Colonic mucosa (tissue), 4 donors: ENCODE measurements at regions of chr6 and their contacts with region 1.

Region 1: DNA sequence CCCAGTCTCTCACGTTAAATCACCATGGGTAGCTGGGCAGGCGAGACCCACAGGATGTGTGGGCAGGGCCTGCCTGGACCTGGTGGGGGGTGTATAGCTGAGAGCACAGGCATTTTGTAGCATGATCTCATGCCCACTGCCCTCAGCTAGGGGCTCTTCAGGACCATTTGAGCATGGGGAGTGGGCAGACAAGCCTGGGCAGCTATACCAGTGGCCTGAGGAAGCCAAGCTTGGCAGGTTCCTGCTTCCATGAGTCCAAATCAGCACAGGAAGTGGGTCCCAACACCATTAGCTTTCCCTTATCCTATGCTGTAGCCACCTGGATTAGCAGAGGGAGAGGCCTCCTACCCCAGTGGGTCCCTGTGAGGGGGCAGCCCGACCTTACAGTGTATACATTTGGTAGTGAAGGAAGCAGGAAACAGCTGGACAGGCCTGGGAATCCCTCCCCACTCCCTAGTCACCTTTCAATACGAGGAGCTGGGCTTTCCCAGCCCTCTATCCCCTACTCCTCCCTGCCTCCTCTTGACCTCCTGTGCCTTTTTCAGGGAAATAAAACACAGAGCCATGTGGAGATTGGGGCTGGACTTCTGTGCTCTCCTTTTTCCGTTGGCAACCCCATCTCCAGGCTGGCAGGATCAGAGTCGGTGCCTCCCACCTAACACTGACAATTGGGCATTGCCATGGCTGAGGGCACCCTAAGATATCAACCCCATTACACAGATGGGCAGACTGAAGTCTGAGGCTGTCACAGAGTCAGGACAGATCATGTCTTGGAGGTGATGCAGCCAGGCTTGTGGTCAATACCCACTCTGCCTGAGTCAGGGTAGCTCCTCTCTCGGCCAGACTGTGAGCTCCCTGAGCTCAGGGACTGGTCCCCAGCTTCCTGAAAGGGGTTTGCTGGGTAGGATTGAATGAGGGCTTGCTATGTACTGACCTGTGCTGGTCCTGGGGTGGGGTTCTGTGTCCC is 59.8 kb downstream of the MRPL14 start:
- DNase-seq: no peak
- H3K4me3 ChIP-seq: no peak overlapping the region
- H3K27ac ChIP-seq: no peak overlapping the region
- H3K4me1 ChIP-seq: no peaks in the 10 kb centered on the region
- H3K27me3 ChIP-seq: no peaks in the 10 kb centered on the region
- CTCF ChIP-seq: no peak

Region 2: GRCh38 chr6:44002593-44003344 is 64.7 kb before region 1 on chr6:
- intact Hi-C with region 1: loop called (anchors 5 kb)
- DNase-seq: peak; percentile 75
- H3K4me3 ChIP-seq: peak overlapping the region; percentile 28
- H3K27ac ChIP-seq: no peak overlapping the region
- H3K4me1 ChIP-seq: peaks cover 4% of the 10 kb centered on the region
- H3K27me3 ChIP-seq: no peaks in the 10 kb centered on the region
- CTCF ChIP-seq: no peak